Caco-2 (cell line): ENCODE measurements at regions of chr16 and their contacts with region 1.

Region 1: GRCh38 chr16:83581082-83581481 is 226.7 kb upstream of the HSBP1 start:
- DNase-seq: no peak
- H3K4me3 ChIP-seq: no peak overlapping the region
- H3K4me3 Mint-ChIP-seq: no peak overlapping the region
- H3K27ac Mint-ChIP-seq: no peak overlapping the region
- H3K4me1 ChIP-seq: no peaks in the 10 kb centered on the region
- H3K4me1 Mint-ChIP-seq: no peaks in the 10 kb centered on the region
- H3K27me3 ChIP-seq: no peaks in the 10 kb centered on the region
- H3K27me3 Mint-ChIP-seq: peaks cover 22% of the 10 kb centered on the region
- CTCF ChIP-seq: no peak

Region 2: DNA sequence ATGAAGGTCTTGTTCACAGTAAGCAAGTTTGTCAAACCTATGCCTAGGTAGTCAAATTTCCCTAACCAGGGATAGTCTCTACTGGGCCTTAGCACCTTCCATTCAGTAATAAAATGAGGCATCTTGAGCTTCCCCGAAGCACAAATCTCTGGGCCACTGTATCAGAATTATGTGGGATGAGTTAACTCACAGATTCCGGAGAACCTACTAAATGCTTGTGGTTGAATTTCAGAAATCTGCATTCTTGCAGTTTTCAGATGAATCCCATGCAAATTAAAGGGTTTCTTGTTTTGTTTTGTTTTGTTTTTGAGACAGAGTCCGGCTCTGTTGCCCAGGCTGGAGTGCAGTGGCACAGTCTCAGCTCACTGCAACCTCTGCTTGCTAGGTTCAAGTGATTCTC is 252.1 kb before region 1 on chr16:
- CTCF ChIA-PET with region 1: no interaction called
- POLR2A ChIA-PET with region 1: no interaction called
- intact Hi-C with region 1: no loop called
- DNase-seq: no peak
- H3K4me3 ChIP-seq: no peak overlapping the region
- H3K4me3 Mint-ChIP-seq: no peak overlapping the region
- H3K27ac Mint-ChIP-seq: no peak overlapping the region
- H3K4me1 ChIP-seq: no peaks in the 10 kb centered on the region
- H3K4me1 Mint-ChIP-seq: no peaks in the 10 kb centered on the region
- H3K27me3 ChIP-seq: no peaks in the 10 kb centered on the region
- H3K27me3 Mint-ChIP-seq: peaks cover 20% of the 10 kb centered on the region
- CTCF ChIP-seq: no peak

Region 3: DNA sequence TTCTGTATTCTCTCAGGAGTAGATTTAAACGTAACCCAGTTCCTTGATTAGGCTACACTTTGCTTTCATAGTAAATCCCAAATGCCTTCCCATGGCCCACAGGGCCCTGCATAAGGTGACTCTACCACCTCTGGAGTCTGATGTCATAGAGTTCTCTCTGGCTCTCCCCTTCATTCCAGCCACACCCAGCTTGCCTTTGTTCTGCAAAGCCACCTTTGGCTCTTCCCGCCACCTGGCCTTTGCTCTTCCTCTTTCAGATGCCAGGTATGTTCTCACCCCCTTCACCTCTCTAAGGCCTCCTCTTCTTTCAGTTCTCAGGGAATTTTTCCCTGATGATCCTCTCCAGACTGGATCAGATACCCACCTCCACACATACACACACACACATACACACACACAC is 85.4 kb after region 1 on chr16:
- CTCF ChIA-PET with region 1: no interaction called
- POLR2A ChIA-PET with region 1: no interaction called
- intact Hi-C with region 1: loop called (anchors 10 kb)
- DNase-seq: no peak
- H3K4me3 ChIP-seq: no peak overlapping the region
- H3K4me3 Mint-ChIP-seq: no peak overlapping the region
- H3K27ac Mint-ChIP-seq: no peak overlapping the region
- H3K4me1 ChIP-seq: no peaks in the 10 kb centered on the region
- H3K4me1 Mint-ChIP-seq: peaks cover 6% of the 10 kb centered on the region
- H3K27me3 ChIP-seq: no peaks in the 10 kb centered on the region; the same call in none of the 2 replicates
- H3K27me3 Mint-ChIP-seq: peaks cover 7% of the 10 kb centered on the region
- CTCF ChIP-seq: no peak